Posterior cingulate gyrus (tissue), 11 donors: ENCODE measurements at regions of chr16 and their contacts with region 1.

Region 1: DNA sequence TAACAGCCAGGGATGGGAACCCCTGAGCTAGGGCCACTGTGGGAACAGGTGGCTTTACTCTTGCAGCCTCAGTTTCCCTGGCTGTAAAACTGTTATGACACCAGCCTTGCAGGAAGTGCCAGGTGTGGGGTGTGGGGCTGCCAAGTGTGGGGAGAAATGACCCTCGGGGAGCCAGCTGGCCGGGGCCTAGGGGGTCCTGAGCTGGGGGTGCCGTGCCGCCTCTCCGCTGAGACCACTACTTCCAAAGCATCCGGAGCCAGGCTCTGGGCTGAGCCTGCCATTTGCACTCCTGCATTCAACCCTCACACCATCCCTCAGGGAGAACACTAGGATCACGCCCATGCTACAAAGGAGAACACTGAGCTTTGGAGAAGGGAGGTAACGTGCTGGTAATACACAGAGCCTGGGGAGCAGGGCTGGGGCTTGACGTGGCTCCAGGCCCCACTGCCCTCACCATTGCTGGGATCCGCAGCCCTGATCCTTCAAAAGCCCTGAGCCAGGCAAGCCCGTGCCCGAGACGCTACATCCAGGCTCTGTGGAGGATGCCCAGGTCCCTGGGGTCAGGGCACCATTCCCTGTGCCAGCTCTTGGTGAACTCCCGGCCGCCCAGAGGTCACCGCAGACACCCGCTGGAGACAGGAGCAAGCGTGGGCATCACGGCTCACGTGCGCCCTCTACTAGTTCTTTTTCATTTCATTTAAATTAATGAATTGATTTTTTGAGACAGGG is 28.8 kb upstream of the GINS2 start:
- DNase-seq: peak in 8 of 10 donors; percentile 49 to 91 (median 69)

Region 2: DNA sequence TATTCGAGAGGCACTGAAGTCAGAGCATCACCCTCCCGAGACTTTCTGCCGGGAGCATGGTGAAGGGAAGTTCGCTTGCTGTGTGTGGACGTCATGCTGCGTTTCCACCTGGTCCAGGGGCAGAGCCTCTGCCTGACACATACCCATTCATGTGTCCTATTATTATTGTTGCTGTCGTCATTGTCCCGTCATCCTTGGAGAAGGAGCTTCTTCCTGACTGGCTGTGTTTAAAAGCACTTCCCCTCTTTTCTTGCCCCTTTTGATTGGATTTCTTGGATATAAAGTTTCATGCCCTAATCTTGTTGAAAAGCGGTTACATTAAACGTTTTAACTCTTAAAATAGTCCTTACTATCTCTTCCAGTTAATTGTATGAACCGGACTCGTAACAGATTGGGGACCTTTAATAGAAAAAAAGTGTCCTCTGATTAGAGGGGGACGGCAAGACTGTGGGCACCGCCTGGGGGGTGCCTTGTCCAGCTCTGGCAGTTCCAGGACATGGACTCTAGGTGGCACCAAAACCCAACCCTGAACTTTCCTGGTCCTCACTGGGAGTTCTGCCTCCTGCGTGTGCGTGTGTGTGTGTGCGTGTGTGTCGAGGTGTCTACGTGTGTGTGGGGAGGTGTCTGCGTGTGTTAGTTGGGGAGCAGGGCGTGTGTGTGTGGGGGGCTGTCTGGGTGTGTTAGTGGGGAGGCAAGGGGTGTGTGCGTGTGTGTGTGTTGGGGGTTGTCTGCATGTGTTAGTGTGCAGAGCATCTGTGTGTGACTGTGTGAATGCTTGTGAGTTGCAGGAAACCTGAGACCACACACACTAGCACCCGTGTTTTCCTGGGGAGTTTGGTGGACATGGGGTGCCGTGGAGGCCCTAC is 472.0 kb before region 1 on chr16:
- intact Hi-C with region 1: loop called (anchors 2 kb)
- DNase-seq: peak in 8 of 10 donors; percentile 45 to 93 (median 64)

Region 3: DNA sequence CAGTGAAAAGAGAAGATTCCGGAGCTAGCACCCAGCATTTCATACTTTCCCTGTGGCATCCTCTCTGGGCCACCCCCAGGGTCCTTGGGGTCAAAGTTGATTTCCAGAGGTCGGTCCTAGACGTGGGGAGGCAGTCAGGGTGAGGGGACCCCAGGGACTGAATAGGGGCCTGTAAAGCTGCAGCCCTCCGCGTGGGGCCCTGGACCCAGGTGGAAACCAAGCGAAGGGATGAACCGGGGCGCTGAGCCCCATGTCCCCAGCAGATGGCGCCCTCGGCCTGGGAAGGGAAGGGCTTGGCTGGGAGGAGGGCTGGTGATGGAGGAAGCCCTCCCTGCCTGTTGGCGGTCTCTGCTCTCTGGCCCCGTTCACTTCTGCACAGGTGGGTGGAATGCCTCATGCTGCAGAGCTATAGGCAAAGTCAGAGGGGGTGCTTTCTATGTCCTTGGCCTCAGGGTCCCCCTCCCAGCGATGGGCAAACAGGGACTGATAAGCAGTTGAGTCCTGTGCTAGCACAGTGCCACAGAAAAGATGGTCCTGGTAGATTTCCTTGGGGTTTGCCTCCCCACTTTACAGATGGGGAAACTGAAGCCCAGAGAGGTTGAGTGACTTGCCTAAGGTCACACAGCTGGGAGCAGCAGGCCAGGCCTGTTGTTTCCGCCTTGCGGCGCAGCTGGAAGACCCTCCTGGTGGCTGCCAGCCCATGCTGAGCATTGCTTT is 441.9 kb before region 1 on chr16:
- intact Hi-C with region 1: loop called (anchors 10 kb)
- DNase-seq: peak; percentile 73 to 97 (median 86)

Region 4: DNA sequence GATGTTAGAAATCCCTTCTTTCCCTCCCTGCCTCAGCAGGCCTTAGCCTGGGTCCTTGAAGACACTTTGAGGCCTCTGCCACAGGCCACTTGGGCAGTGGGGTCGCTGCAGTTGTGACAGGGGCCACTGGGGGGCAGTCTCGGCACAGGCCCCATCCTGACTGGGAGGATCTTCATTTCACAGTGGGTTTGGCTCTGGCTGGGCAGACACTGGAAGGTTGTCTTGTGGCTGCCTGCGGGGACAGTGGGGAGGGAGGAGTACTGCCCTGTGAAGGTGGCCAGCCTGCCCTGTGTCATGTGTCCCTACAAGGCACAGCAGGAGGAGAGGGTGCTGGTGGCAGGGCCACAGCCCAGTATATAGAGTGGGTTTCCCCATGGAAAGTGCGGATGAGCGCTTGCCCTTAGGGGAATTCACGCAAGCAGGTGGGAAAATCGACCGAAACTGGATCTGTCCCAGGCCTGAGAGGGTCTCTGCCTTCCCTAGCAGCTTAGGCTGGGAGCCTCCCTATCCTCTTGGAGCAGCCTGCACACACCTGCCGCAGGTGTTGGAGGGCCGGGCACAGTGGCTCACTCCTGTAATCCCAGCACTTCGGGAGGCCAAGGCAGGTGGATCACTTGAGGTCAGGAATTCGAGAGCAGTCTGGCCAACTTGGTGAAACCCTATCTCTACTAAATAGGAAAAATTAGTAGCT is 57.6 kb before region 1 on chr16:
- intact Hi-C with region 1: loop called (anchors 1 kb)
- DNase-seq: peak in 9 of 10 donors; percentile 45 to 96 (median 79)

Region 5: DNA sequence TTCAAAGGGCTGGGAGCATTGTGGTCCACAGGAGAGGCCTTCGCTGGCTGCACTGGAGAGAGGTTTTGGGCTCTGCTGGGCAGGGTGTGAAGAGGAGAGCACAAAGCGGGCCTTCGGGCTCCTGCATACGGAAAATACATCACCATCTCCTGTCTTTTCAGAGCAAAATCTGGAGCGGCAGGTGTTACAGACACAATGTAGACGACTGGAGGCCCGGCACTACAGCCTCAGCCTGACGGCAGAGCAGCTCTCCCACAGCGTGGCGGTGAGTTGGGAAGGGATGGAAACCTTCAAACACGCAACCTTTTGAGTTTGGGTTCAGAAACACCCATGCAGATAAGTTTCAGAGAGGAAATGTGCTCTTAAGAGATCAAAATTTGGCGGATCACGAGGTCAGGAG is 46.7 kb before region 1 on chr16:
- intact Hi-C with region 1: no loop called
- DNase-seq: peak in 2 of 10 donors; percentile 5 to 7